Endothelial cell of umbilical vein (primary cell): ENCODE measurements at regions of chr11 and their contacts with region 1.

Region 1: GRCh38 chr11:117426269-117426685 is 98.6 kb downstream of the CEP164 start:
- DNase-seq: peak; percentile 46
- H3K4me3 ChIP-seq: no peak overlapping the region
- H3K27ac ChIP-seq: no peak overlapping the region
- H3K4me1 ChIP-seq: no peaks in the 10 kb centered on the region
- H3K27me3 ChIP-seq: no peaks in the 10 kb centered on the region
- CTCF ChIP-seq: peak; percentile 93 to 96
- POLR2A ChIP-seq: no peak

Region 2: DNA sequence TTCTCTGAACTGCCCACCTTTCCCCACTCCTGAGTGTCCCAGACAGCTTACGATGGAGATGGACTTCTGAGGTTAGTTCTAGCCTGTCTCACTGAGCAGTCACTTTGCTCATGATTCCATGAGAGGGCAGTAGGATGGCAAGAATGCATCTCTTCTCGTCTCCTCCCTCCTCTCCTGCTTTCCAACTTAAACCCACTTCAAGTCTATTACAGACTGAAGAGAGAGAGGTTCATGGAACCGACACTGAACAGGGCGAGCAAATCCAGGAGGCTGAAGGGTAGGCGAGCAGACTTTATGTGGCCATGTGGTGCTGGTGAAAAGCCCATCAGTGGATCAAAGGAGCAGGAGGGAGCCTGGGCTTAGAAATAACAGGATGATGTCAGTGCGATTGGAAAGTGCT is 60.0 kb before region 1 on chr11:
- CTCF ChIA-PET with region 1: interaction called, 11 read pairs
- POLR2A ChIA-PET with region 1: no interaction called
- dilution Hi-C with region 1: no loop called
- intact Hi-C with region 1: no loop called
- DNase-seq: no peak
- H3K4me3 ChIP-seq: no peak overlapping the region
- H3K27ac ChIP-seq: no peak overlapping the region
- H3K4me1 ChIP-seq: no peaks in the 10 kb centered on the region
- H3K27me3 ChIP-seq: no peaks in the 10 kb centered on the region
- CTCF ChIP-seq: no peak
- POLR2A ChIP-seq: no peak

Region 3: DNA sequence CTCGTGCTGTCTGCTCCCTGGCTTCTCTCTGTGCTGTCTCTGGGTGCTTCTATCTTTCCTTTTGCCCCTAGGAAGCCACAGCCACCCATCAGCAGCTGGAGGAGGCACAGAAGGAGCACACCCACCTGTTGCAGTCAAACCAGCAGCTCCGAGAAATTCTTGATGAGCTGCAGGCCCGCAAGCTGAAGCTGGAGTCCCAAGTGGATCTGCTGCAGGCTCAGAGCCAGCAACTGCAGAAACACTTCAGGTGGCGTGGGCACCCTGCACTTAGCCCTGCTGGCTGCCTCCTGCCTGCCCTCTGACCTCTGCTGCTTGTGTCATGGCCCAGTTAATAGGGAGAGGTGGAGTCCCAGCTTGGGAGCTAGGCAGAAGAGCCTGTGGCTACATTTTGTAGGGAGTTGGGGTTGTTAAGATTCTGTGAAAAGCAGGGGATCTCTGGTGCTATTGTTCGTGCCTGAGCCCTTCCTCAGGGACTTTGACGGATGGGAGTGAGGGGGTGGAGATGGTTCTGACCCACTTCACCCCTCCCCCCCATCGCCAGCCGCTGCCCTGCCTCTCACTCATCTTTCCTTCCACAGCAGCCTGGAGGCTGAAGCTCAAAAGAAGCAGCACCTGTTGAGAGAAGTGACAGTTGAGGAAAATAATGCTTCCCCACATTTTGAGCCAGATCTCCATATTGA is 30.7 kb before region 1 on chr11:
- CTCF ChIA-PET with region 1: interaction called, 15 read pairs
- POLR2A ChIA-PET with region 1: no interaction called
- dilution Hi-C with region 1: no loop called
- intact Hi-C with region 1: no loop called
- DNase-seq: no peak
- H3K4me3 ChIP-seq: no peak overlapping the region
- H3K27ac ChIP-seq: no peak overlapping the region
- H3K4me1 ChIP-seq: no peaks in the 10 kb centered on the region
- H3K27me3 ChIP-seq: no peaks in the 10 kb centered on the region
- CTCF ChIP-seq: no peak
- POLR2A ChIP-seq: no peak

Region 4: GRCh38 chr11:117443266-117444195 is 17.3 kb after region 1 on chr11:
- CTCF ChIA-PET with region 1: interaction called, 29 read pairs
- POLR2A ChIA-PET with region 1: no interaction called
- dilution Hi-C with region 1: no loop called
- intact Hi-C with region 1: no loop called
- DNase-seq: no peak
- H3K4me3 ChIP-seq: no peak overlapping the region
- H3K27ac ChIP-seq: no peak overlapping the region
- H3K4me1 ChIP-seq: no peaks in the 10 kb centered on the region
- H3K27me3 ChIP-seq: peaks cover 0 to 4% of the 10 kb centered on the region in 2 experiments
- CTCF ChIP-seq: peak; percentile 17 to 36
- POLR2A ChIP-seq: no peak

Region 5: GRCh38 chr11:117458275-117458674 is 32.0 kb after region 1 on chr11:
- CTCF ChIA-PET with region 1: interaction called, 14 read pairs
- POLR2A ChIA-PET with region 1: no interaction called
- dilution Hi-C with region 1: no loop called
- intact Hi-C with region 1: no loop called
- DNase-seq: no peak
- H3K4me3 ChIP-seq: no peak overlapping the region
- H3K27ac ChIP-seq: no peak overlapping the region
- H3K4me1 ChIP-seq: no peaks in the 10 kb centered on the region
- H3K27me3 ChIP-seq: peaks cover 2 to 4% of the 10 kb centered on the region in 2 experiments
- CTCF ChIP-seq: no peak
- POLR2A ChIP-seq: no peak

Region 6: DNA sequence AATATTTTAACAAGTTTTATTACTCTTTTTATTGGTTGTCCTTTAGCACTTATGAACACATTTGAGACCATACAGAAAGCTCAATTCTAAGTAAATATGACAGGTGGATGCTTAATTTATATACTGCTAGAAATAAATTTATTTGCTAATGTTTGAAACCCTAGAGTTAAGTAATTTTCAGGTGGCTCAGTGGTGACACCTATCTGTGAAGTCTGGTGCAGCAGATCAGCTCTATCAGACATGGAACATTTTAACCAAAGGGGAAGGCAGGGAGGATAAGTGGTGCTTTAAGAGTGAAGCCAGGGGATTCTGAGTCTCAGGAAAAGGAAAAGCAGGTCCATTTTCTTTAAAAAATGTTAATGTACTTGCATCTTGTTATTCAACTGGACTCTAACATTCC is 194.9 kb after region 1 on chr11:
- CTCF ChIA-PET with region 1: interaction called, 133 read pairs
- POLR2A ChIA-PET with region 1: no interaction called
- dilution Hi-C with region 1: no loop called
- intact Hi-C with region 1: loop called (anchors 1 kb)
- DNase-seq: peak; percentile 15
- H3K4me3 ChIP-seq: no peak overlapping the region
- H3K27ac ChIP-seq: no peak overlapping the region
- H3K4me1 ChIP-seq: no peaks in the 10 kb centered on the region
- H3K27me3 ChIP-seq: no peaks in the 10 kb centered on the region
- CTCF ChIP-seq: peak; percentile 29 to 41
- POLR2A ChIP-seq: no peak

Region 7: DNA sequence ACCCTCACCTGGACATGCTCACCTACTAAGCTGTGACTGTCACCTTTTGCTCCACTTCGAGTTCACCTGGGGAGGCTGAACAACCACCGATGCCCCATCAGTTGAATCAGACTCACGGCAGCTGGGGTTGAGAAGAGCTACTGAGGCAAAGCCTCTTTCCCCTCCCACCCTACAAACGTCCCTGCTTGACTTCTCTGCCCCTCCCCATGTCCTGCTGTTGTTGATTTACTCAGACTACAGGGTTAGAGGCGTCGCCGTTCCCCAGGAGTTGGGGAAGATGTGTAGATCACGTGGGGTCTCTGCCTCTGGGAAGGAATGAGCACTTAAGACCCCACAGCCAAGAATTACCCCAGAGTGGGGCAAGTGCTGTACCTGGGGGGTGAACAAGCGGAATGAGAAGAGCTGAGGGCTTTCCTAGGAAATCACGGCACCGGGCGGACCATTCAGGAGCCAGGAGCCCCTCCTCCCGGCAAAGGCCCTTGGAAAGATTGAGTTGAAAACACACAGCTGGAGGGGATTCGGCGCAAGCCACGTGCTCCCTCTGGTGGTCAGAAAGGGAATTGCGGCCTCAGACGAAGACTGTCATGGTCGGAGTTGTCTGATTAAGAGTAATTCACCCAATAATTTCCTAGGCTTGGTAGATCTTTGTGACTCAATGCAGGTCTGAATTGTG is 391.2 kb after region 1 on chr11:
- CTCF ChIA-PET with region 1: interaction called, 118 read pairs
- POLR2A ChIA-PET with region 1: no interaction called
- dilution Hi-C with region 1: no loop called
- intact Hi-C with region 1: loop called (anchors 1 kb)
- DNase-seq: peak; percentile 88
- H3K4me3 ChIP-seq: no peak overlapping the region
- H3K27ac ChIP-seq: peak overlapping the region; percentile 65
- H3K4me1 ChIP-seq: peaks cover 15% of the 10 kb centered on the region
- H3K27me3 ChIP-seq: peaks cover 0 to 1% of the 10 kb centered on the region in 2 experiments
- CTCF ChIP-seq: peak; percentile 98 to 99
- POLR2A ChIP-seq: no peak